OCI-LY7 (cell line): ENCODE measurements at regions of chr1 and their contacts with region 1.

Region 1: DNA sequence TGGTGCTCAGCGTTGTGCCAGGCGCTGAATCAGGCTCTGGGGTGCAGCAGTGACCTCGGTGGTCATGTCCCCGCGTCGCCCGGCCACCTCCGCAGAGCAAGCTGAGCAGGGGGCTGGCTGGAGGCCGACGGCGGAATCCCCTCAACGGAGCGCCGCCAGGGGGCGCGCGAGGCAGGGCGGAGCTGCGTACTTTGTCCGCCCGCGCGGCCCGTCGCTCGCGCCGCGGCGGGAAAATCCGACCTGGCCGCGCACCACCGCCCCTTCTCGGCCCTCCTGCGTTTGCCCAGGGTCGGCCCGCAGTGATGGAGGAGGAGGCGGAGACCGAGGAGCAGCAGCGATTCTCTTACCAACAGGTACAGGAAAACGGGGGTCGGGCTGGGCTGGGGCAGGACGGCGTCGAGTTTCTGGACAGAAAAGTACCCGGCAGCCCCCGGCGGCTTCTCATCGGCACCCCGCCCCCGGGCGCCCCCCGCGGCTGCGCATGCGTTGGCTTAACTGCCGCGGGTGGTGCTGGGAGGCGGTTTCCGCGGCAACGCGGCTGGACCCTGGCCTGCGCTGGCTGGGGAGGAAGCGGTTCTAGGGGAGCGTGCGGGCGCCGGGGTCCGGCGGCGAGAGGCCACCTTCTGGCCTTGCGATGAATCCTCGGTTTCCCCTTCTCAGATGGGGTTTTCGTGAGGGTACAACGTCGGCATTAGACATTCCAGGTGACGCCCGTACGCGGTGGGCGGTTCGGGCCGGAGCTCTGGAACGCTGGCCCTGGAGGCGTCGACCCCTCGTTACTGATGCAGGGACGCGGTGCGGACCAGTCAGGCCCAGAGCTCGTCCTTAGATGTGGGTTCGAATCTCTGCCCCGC is at the start of gene CENPS:
- DNase-seq: peak; percentile 93
- H3K4me3 ChIP-seq: peak within 1 kb of the TSS; percentile 78
- H3K27ac ChIP-seq: peak within 1 kb of the TSS; percentile 67
- H3K4me1 ChIP-seq: peaks cover 32% of the 10 kb centered on the region
- CTCF ChIP-seq: peak; percentile 89
- total RNA-seq, gene CENPS: 13.6 and 18.8 TPM in 2 replicates

Region 2: GRCh38 chr1:9874959-9875635 is 555.3 kb before region 1 on chr1:
- CTCF ChIA-PET with region 1: no interaction called
- POLR2A ChIA-PET with region 1: no interaction called
- intact Hi-C with region 1: loop called (anchors 2 kb)
- DNase-seq: peak; percentile 81
- H3K4me3 ChIP-seq: no peak overlapping the region
- H3K27ac ChIP-seq: no peak overlapping the region
- H3K4me1 ChIP-seq: peaks cover 40% of the 10 kb centered on the region
- CTCF ChIP-seq: peak; percentile 98

Region 3: GRCh38 chr1:10209905-10210810 is 220.3 kb before region 1 on chr1 and contains the start of gene KIF1B:
- CTCF ChIA-PET with region 1: no interaction called
- POLR2A ChIA-PET with region 1: no interaction called
- intact Hi-C with region 1: loop called (anchors 2 kb)
- DNase-seq: peak; percentile 97
- H3K4me3 ChIP-seq: peak within 1 kb of the TSS; percentile 78
- H3K27ac ChIP-seq: no peak within 1 kb of the TSS
- H3K4me1 ChIP-seq: peaks cover 11% of the 10 kb centered on the region
- CTCF ChIP-seq: peak; percentile 88
- total RNA-seq, gene KIF1B: 2.2 and 3.8 TPM in 2 replicates

Region 4: DNA sequence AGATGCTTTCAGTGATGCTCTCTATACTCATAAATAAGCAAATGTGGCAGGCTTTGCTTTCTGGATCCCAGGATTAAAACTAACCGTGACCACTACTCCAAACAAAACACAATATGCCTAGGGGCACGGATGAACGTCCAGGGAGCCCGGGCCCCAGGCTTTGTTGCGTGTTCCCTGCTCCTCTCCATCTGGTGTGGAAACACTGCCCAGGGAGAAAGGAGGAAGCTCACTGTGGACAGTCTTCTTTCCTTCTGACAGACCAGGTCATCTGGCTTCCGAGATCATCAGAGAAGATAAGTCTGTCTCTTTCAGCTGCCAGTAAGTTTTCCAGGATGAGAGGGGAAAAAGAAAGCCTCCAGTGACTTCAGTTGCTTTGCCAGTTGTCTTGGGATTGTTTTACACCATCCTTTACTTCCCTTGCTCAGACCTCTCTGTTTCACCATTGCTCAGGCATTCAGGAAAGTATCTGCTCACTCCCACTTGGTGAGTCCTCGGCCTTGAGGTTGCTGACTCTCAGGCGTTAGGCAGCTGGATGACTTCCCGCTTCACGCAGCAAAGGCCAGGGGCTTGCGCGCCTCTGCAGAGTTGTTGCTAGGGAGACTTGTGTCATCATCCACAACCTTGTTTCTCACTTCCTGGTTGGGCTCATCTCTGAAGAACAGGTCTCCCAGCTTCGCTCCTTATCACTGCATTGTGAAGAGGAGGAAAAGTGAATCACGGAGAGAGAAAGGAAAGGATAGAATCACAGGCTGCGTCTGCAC is 52.2 kb before region 1 on chr1:
- CTCF ChIA-PET with region 1: no interaction called
- POLR2A ChIA-PET with region 1: no interaction called
- intact Hi-C with region 1: loop called (anchors 1 kb)
- DNase-seq: no peak
- H3K4me3 ChIP-seq: no peak overlapping the region
- H3K27ac ChIP-seq: no peak overlapping the region
- H3K4me1 ChIP-seq: no peaks in the 10 kb centered on the region
- CTCF ChIP-seq: no peak

Region 5: DNA sequence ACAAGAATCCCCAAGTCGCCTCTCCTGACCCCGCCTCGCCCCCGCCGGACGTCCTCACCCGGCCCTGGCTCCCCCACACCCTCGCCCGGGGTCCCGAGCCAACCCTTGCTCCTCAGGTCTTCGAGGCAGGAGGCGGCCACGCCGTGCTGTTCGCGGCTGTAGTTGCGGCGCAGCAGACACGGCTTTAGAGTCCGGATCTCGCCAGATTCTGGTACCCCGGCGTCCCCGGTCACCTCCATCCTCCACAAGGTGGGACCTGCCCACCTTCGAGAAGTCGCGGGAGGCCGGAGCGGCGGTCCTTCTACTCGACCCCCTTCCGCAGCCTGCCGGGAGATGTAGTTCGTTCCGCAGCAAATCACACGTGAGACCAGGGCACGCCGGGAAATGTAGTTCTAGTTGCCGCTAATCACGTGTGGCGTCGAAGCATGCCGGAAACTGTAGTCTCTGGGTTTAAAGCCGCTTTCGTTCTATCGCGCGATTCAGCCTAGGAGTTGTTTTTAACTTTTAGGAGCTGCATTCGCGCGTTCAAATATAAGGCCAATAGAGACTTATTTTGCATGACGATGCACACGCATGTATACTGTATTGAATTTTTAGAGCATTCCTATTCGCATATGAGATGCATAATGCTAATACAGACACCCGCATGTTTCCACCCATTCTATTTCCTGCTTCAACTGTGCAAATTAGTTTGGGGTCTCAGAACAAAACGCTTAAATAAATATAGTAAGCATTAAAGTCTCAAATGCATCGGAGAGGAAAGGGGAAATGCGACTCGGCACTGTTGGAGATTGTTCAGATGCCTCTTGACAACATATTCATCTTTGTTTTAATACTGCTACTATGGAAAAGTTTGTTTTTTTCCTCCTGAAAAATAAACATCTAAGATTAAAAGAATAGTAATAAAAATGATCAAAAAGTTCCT is 42.0 kb after region 1 on chr1 and contains the start of gene DFFA:
- CTCF ChIA-PET with region 1: no interaction called
- POLR2A ChIA-PET with region 1: interaction called, 4 read pairs
- intact Hi-C with region 1: loop called (anchors 1 kb)
- DNase-seq: peak; percentile 98
- H3K4me3 ChIP-seq: peak within 1 kb of the TSS; percentile 85
- H3K27ac ChIP-seq: peak within 1 kb of the TSS; percentile 96
- H3K4me1 ChIP-seq: peaks cover 32% of the 10 kb centered on the region
- CTCF ChIP-seq: 0 out of 2 replicates have a peak, but pooled peaks have one; percentile 13
- total RNA-seq, gene DFFA: 58.4 and 64.6 TPM in 2 replicates

Region 6: GRCh38 chr1:10494754-10495474 is 64.5 kb after region 1 on chr1:
- CTCF ChIA-PET with region 1: interaction called, 6 read pairs
- POLR2A ChIA-PET with region 1: interaction called, 3 read pairs
- intact Hi-C with region 1: loop called (anchors 1 kb)
- DNase-seq: peak; percentile 77
- H3K4me3 ChIP-seq: peak overlapping the region; percentile 46
- H3K27ac ChIP-seq: peak overlapping the region; percentile 34
- H3K4me1 ChIP-seq: peaks cover 13% of the 10 kb centered on the region
- CTCF ChIP-seq: peak; percentile 97